Breast epithelium (tissue), 4 donors: ENCODE measurements at regions of chr11 and their contacts with region 1.

Region 1: GRCh38 chr11:8661001-8661795 is 21.3 kb downstream of the TRIM66 start:
- DNase-seq: no peak
- H3K4me3 ChIP-seq: no peak overlapping the region
- H3K27ac ChIP-seq: no peak overlapping the region
- H3K4me1 ChIP-seq: no peaks in the 10 kb centered on the region
- H3K27me3 ChIP-seq: no peaks in the 10 kb centered on the region
- CTCF ChIP-seq: no peak
- POLR2A ChIP-seq: no peak

Region 2: DNA sequence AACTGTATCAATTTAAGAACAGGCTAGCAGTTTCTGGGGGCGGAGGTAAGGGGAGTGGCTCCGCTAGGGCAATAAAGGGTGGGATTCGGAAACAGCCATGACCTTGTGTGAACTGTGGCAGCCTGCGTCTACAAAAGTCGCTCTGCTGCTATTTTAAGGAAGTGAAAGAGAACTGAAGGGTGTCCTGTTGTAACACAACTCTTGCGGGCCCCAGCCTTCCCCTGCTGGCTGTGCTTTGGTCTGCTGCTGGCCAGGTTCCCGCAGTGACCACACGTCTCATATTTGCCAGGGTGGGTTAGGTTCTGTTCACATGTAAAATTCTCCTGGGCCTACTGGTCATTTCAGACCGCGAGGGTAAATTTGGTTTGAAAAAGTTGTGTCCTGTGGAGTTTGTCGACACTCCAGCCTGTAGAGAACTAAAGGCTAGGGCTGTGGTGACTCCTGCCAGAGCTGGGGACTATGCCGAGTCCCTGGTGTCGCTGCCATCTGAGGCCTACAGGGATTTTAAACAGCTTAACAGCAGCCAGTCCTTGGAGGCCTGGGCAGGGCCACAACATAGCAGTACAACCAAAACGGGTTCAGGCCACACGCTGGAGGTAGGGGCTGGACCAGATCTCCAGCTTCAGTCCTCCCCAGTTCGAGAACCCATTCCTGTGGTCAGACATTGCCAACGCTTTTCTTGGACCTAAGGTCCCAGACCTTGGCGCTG is 1148.5 kb before region 1 on chr11:
- intact Hi-C with region 1: no loop called
- DNase-seq: peak; percentile 59 to 70
- H3K4me3 ChIP-seq: peak overlapping the region; percentile 79 to 84 (median 81)
- H3K27ac ChIP-seq: peak overlapping the region; percentile 95 to 97
- H3K4me1 ChIP-seq: peaks cover 6 to 19% of the 10 kb centered on the region in 2 donors
- H3K27me3 ChIP-seq: no peaks in the 10 kb centered on the region
- CTCF ChIP-seq: peak in 1 of 3 donors; percentile 7
- POLR2A ChIP-seq: no peak

Region 3: GRCh38 chr11:9066433-9066925 is 405.3 kb after region 1 on chr11:
- intact Hi-C with region 1: loop called (anchors 5 kb)
- DNase-seq: no peak
- H3K4me3 ChIP-seq: no peak overlapping the region
- H3K27ac ChIP-seq: no peak overlapping the region
- H3K4me1 ChIP-seq: no peaks in the 10 kb centered on the region
- H3K27me3 ChIP-seq: no peaks in the 10 kb centered on the region
- CTCF ChIP-seq: no peak
- POLR2A ChIP-seq: no peak